Naive thymus-derived CD4-positive, alpha-beta T cell (primary cell): ENCODE measurements at regions of chr9 and their contacts with region 1.

Region 1: GRCh38 chr9:112898872-112899311 is 8.2 kb upstream of the SLC46A2 start:
- DNase-seq: no peak
- ATAC-seq: peak; percentile 43
- H3K4me3 ChIP-seq: no peak overlapping the region
- H3K4me3 Mint-ChIP-seq: no peak overlapping the region
- H3K27ac ChIP-seq: no peak overlapping the region
- H3K27ac Mint-ChIP-seq: no peak overlapping the region
- H3K4me1 ChIP-seq: no peaks in the 10 kb centered on the region
- H3K4me1 Mint-ChIP-seq: peaks cover 0 to 31% (median 0%) of the 10 kb centered on the region in 7 donors
- H3K27me3 ChIP-seq: no peaks in the 10 kb centered on the region
- H3K27me3 Mint-ChIP-seq: peaks cover 37 to 54% (median 39%) of the 10 kb centered on the region in 5 donors

Region 2: GRCh38 chr9:112844771-112845542 is 53.9 kb before region 1 on chr9:
- CTCF ChIA-PET with region 1: interaction called, 3 read pairs
- POLR2A ChIA-PET with region 1: no interaction called
- intact Hi-C with region 1: loop called (anchors 1 kb)
- DNase-seq: peak in 8 of 9 donors; percentile 18 to 80 (median 56)
- ATAC-seq: peak; percentile 82
- H3K4me3 ChIP-seq: no peak overlapping the region
- H3K4me3 Mint-ChIP-seq: peak overlapping the region in 3 of 10 donors; percentile 21 to 32 (median 32)
- H3K27ac ChIP-seq: no peak overlapping the region
- H3K27ac Mint-ChIP-seq: peak overlapping the region in 1 of 9 donors; percentile 28
- H3K4me1 ChIP-seq: peaks cover 0 to 6% of the 10 kb centered on the region in 2 donors
- H3K4me1 Mint-ChIP-seq: peaks cover 8 to 25% (median 17%) of the 10 kb centered on the region in 7 donors
- H3K27me3 ChIP-seq: no peaks in the 10 kb centered on the region
- H3K27me3 Mint-ChIP-seq: no peaks in the 10 kb centered on the region

Region 3: GRCh38 chr9:114047717-114048116 is 1148.8 kb after region 1 on chr9:
- CTCF ChIA-PET with region 1: no interaction called
- POLR2A ChIA-PET with region 1: no interaction called
- intact Hi-C with region 1: no loop called
- DNase-seq: peak in 1 of 9 donors; percentile 9
- ATAC-seq: no peak
- H3K4me3 ChIP-seq: no peak overlapping the region
- H3K4me3 Mint-ChIP-seq: no peak overlapping the region
- H3K27ac ChIP-seq: no peak overlapping the region
- H3K27ac Mint-ChIP-seq: no peak overlapping the region
- H3K4me1 ChIP-seq: no peaks in the 10 kb centered on the region
- H3K4me1 Mint-ChIP-seq: no peaks in the 10 kb centered on the region
- H3K27me3 ChIP-seq: no peaks in the 10 kb centered on the region
- H3K27me3 Mint-ChIP-seq: peaks cover 0 to 11% (median 0%) of the 10 kb centered on the region in 5 donors